ENCODE measurements at regions of chr2 and their contacts with region 1.

Region 1: DNA sequence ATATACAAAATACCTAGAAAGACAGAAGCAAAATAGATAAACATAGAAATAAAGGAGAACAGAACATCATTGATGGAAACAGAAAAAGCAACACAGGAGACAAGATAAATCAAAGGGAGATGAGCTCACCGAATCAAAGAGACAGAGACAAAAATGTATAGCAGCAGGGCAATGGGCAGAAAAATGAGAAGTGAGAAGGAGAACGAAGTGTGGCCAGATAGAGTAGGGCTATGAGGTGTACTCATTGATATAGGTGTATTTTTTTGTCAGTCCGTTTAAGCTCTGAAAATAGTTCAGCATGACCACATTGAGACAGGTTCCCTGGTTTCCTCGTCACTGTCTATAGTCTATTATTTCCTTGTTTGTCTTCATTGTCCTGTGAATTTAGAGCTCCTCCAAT is 55.1 kb downstream of the SP100 start:
- DNase-seq: no peak
- ATAC-seq: no peak
- H3K4me3 Mint-ChIP-seq: no peak overlapping the region
- H3K27ac Mint-ChIP-seq: peak overlapping the region; percentile 22
- H3K4me1 Mint-ChIP-seq: peaks cover 32% of the 10 kb centered on the region
- H3K27me3 Mint-ChIP-seq: no peaks in the 10 kb centered on the region
- CTCF ChIP-seq: no peak

Region 2: DNA sequence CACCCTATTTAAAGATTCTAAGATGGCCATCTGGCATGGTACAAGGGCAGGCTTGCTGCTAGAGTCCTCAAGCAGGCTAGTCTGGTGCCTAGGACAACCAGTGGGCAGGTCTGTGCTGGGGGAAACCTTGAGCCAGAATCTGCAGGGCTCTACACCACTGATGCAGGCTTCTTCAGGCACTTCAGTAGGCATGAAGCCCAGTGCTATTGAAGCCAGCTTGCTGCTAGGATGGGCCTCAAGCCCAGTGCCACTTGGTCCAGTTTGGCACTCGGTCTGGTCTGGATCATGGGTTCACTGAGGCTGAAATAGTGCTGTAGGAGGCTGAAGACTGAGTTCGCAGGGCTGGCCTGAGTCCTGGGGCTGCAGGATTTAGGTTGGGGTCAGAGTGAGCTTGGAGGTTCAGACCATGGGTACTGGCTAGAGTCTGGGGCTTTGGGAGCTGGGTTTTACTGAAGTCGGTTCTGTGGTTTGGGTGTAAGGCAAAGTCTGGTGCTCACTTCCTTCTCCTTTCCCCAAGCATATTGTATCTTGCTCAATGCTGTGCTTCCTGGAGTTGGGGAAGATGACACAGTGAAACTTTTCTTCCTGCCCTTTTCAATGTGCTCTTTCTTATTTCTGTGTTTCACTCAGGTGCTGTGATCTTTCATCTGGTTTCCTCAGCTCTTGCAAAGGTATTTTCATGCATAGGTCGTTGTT is 13.9 kb before region 1 on chr2:
- CTCF ChIA-PET with region 1: interaction called, 3 read pairs
- POLR2A ChIA-PET with region 1: interaction called, 10 read pairs
- intact Hi-C with region 1: no loop called
- DNase-seq: no peak
- ATAC-seq: peak; percentile 27
- H3K4me3 Mint-ChIP-seq: no peak overlapping the region
- H3K27ac Mint-ChIP-seq: peak overlapping the region; percentile 85
- H3K4me1 Mint-ChIP-seq: peaks cover 63% of the 10 kb centered on the region
- H3K27me3 Mint-ChIP-seq: no peaks in the 10 kb centered on the region
- CTCF ChIP-seq: no peak